Left cardiac atrium (tissue), 4 donors: ENCODE measurements at regions of chr10 and their contacts with region 1.

Region 1: GRCh38 chr10:31864834-31865518 is 63.7 kb downstream of the ARHGAP12 start:
- DNase-seq: no peak
- ATAC-seq: no peak

Region 2: GRCh38 chr10:31947144-31947926 is 82.4 kb after region 1 on chr10:
- intact Hi-C with region 1: loop called (anchors 1 to 10 kb)
- DNase-seq: no peak
- ATAC-seq: peak; percentile 63 to 87

Region 3: DNA sequence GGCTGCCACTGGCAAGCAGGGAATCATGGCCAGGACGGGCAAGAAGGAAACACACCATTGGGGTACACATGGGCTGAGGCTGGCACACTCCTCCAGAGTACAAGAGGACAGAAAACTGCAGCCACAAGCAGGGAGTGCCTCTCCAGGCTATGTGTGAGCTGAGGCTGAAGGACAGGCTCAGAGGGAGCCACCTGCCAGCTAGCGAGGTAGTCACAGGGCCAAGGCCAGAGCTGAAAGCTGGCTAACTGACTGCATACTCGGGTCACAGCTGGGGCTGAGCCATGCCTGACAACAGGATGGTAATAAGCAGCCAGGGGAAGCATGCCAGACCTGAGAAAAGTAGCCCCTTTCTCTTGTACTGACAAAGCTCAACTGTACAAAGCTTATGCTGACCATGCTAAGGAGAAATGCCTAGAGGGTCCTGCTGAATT is 139.2 kb after region 1 on chr10:
- intact Hi-C with region 1: loop called in 1 of 2 experiments (anchors 5 kb)
- DNase-seq: no peak
- ATAC-seq: peak; percentile 62 to 77

Region 4: DNA sequence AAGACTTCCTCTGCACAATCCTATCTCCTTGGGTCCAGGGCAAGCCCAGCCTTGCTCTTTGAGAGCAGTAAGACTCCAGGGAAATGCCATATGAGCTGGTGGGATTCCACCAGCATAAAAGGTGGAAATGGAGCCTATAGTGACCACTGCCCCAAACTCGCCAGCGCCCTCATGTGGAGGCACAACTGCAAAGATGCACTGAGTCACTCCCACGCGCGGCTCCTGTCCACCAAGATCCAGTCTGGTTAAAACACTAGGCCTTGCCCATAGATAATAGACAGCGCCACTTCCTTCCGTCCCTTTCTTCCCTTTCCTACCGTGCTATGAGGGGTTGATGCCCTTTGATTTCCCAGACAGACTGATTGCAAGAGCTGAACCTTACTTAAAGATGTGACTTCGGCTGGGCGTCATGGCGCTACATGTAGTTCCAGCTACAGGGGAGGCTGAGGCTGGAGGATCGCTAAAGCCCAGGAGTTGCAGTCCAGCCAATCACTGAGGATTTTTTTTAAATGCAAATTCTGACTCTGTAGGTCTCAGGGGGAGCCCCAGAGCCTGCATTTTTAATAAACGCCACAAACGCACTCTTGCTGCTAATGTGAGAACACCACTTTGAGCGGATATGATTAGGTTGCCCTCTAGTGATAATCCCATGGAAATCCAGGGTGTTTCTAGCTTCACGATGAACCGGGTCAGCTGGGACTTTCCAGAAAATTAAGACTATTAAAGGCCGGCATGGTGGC is 345.5 kb after region 1 on chr10:
- intact Hi-C with region 1: loop called (anchors 10 kb)
- DNase-seq: no peak
- ATAC-seq: peak; percentile 65 to 68